ENCODE measurements at regions of chr11 and their contacts with region 1.

Region 1: GRCh38 chr11:93234602-93235207 is 36.9 kb upstream of the SLC36A4 start:
- DNase-seq: peak; percentile 78
- H3K4me3 ChIP-seq: peak overlapping the region in 1 of 2 experiments; percentile 44; a peak in 1 of 4 replicates
- H3K27ac ChIP-seq: no peak overlapping the region
- H3K4me1 ChIP-seq: no peaks in the 10 kb centered on the region; a peak in 2 of 4 replicates
- H3K27me3 ChIP-seq: peaks cover 13% of the 10 kb centered on the region
- CTCF ChIP-seq: peak; percentile 87
- EP300 ChIP-seq: no peak
- RAD21 ChIP-seq: peak; percentile 99

Region 2: GRCh38 chr11:92852946-92853345 is 381.8 kb before region 1 on chr11:
- CTCF ChIA-PET with region 1: no interaction called
- POLR2A ChIA-PET with region 1: no interaction called
- DNase-seq: no peak
- H3K4me3 ChIP-seq: no peak overlapping the region
- H3K27ac ChIP-seq: peak overlapping the region in 1 of 2 experiments; percentile 34; a peak in 1 of 4 replicates
- H3K4me1 ChIP-seq: peaks cover 0 to 18% of the 10 kb centered on the region in 2 experiments; a peak in 2 of 4 replicates
- H3K27me3 ChIP-seq: no peaks in the 10 kb centered on the region
- CTCF ChIP-seq: no peak
- EP300 ChIP-seq: no peak
- RAD21 ChIP-seq: no peak

Region 3: GRCh38 chr11:93213622-93214021 is 21.1 kb before region 1 on chr11:
- CTCF ChIA-PET with region 1: interaction called, 11 read pairs
- POLR2A ChIA-PET with region 1: no interaction called
- DNase-seq: no peak
- H3K4me3 ChIP-seq: no peak overlapping the region
- H3K27ac ChIP-seq: no peak overlapping the region
- H3K4me1 ChIP-seq: peaks cover 0 to 10% of the 10 kb centered on the region in 2 experiments; a peak in 2 of 4 replicates
- H3K27me3 ChIP-seq: peaks cover under 1% of the 10 kb centered on the region; the same call in 1 of the 2 replicates
- CTCF ChIP-seq: no peak
- EP300 ChIP-seq: no peak
- RAD21 ChIP-seq: no peak

Region 4: DNA sequence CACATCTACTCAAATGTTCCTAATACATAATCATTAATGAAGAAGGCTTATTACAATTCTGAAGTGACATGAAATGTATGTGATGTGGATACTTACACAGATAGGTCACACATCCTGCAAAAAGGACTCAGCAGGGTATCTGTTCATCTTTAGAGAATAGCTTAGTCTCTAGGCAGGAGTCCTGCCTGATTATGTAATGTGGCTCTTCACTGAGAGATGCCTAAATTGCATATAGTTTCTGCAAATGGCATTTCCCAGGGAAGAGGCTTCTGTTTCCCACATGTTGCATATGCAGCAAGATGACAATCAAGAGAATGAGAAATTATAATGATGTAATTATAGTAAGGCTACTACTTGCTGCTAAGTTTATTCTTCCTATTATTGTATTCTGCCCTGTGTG is 21.9 kb after region 1 on chr11:
- CTCF ChIA-PET with region 1: interaction called, 34 read pairs
- POLR2A ChIA-PET with region 1: no interaction called
- DNase-seq: peak; percentile 17
- H3K4me3 ChIP-seq: no peak overlapping the region
- H3K27ac ChIP-seq: no peak overlapping the region
- H3K4me1 ChIP-seq: no peaks in the 10 kb centered on the region; a peak in 2 of 4 replicates
- H3K27me3 ChIP-seq: no peaks in the 10 kb centered on the region
- CTCF ChIP-seq: no peak
- EP300 ChIP-seq: no peak
- RAD21 ChIP-seq: no peak

Region 5: GRCh38 chr11:93543292-93543977 is 308.7 kb after region 1 on chr11 and contains the start of gene SMCO4:
- CTCF ChIA-PET with region 1: interaction called, 202 read pairs
- POLR2A ChIA-PET with region 1: interaction called, 3 read pairs
- DNase-seq: peak; percentile 93
- H3K4me3 ChIP-seq: peak within 1 kb of the TSS; percentile 62 to 72
- H3K27ac ChIP-seq: no peak within 1 kb of the TSS
- H3K4me1 ChIP-seq: peaks cover 4 to 5% of the 10 kb centered on the region in 2 experiments; a peak in 1 of 4 replicates
- H3K27me3 ChIP-seq: peaks cover 7% of the 10 kb centered on the region; the same call in 1 of the 2 replicates
- CTCF ChIP-seq: peak; percentile 59
- EP300 ChIP-seq: peak in 1 of 2 experiments; percentile 31; a peak in 1 of 4 replicates
- RAD21 ChIP-seq: peak; percentile 77
- polyA plus RNA-seq, gene SMCO4: 9.0 and 9.2 TPM in 2 replicates

Region 6: DNA sequence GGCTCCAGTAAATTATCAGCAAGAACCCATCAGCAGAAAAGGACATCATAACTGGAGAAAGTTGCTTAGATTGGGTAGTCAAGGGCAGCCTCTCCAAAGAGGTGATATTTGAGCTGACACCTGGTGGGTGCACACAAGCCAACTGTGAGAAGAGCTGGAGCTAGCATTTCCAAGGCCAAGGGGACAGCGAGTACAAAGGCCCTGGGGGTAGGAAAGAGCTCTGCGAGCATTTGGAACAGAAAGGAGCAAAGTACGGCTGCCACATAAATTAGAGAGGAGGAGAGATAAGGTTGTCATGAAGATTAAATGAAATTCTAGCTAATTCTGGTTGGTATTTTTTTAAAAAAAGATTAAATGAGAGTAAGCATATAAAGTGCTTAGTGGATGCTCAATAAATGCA is 330.2 kb after region 1 on chr11:
- CTCF ChIA-PET with region 1: interaction called, 14 read pairs
- POLR2A ChIA-PET with region 1: no interaction called
- DNase-seq: peak; percentile 41
- H3K4me3 ChIP-seq: no peak overlapping the region
- H3K27ac ChIP-seq: no peak overlapping the region
- H3K4me1 ChIP-seq: peaks cover 0 to 4% of the 10 kb centered on the region in 2 experiments; a peak in 2 of 4 replicates
- H3K27me3 ChIP-seq: no peaks in the 10 kb centered on the region
- CTCF ChIP-seq: no peak
- EP300 ChIP-seq: no peak
- RAD21 ChIP-seq: no peak

Measured in SK-N-SH (cell line).